ENCODE measurements at regions of chr20 and their contacts with region 1.

Region 1: GRCh38 chr20:51306503-51307358 is 235.8 kb downstream of the NFATC2 start:
- DNase-seq: peak; percentile 90
- H3K4me3 ChIP-seq: peak overlapping the region in 1 of 2 experiments; percentile 35; a peak in 1 of 4 replicates
- H3K27ac ChIP-seq: peak overlapping the region in 1 of 2 experiments; percentile 22; a peak in 1 of 4 replicates
- H3K4me1 ChIP-seq: peaks cover 0 to 13% of the 10 kb centered on the region in 2 experiments; a peak in 1 of 4 replicates
- H3K27me3 ChIP-seq: no peaks in the 10 kb centered on the region
- CTCF ChIP-seq: peak; percentile 88
- EP300 ChIP-seq: no peak
- RAD21 ChIP-seq: peak; percentile 98

Region 2: DNA sequence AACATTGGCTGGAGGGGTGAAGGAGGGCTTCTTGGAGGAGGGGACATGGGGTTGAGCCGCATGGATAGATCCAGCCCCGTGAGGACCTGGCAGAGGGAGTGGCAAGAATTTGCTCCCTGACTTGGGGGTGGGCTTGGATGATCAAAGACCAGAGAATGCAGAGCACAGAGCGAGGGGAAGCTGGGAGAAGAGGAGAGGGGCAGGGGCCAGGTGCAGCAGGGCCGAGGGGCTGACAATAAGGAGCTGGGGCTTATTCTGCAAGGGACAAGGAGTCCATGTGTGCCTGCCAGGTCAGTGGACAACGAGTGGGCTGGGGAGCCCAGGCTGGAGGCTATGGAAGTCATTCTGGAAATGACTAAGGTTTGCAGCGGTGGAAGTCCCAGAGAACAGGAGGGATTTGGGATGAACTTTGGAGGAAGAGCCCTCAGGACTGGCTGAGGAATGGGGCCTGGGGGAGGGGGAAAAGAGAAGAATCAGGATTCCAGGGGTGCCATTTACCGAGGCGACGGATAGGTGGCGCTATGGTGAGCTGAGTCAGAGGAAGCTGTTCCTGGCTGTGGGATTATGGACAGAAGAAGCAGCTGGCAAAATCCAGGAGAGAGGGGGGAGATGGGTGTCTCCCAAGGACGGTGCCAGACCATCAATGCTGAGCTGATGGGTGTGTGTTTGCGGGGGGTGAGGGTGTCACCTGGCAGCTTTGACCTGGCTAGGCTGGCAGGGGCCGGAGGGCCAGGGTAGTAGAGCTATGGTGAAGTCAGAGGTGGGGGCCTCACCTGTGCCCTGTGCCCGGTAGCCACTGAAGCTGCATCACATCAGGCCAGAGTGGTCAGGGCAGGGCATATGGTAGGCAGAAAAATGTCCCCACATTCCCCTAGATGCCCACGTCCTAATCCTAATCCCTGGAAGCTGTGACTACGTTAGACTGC is 291.7 kb before region 1 on chr20:
- CTCF ChIA-PET with region 1: interaction called, 52 read pairs
- POLR2A ChIA-PET with region 1: interaction called, 3 read pairs
- DNase-seq: peak; percentile 87
- H3K4me3 ChIP-seq: no peak overlapping the region
- H3K27ac ChIP-seq: no peak overlapping the region; a peak in 1 of 4 replicates
- H3K4me1 ChIP-seq: peaks cover 0 to 34% of the 10 kb centered on the region in 2 experiments; a peak in 1 of 4 replicates
- H3K27me3 ChIP-seq: no peaks in the 10 kb centered on the region
- CTCF ChIP-seq: peak; percentile 81
- EP300 ChIP-seq: no peak
- RAD21 ChIP-seq: peak; percentile 83

Region 3: GRCh38 chr20:51128198-51128597 is 178.5 kb before region 1 on chr20:
- CTCF ChIA-PET with region 1: interaction called, 14 read pairs
- POLR2A ChIA-PET with region 1: no interaction called
- DNase-seq: no peak
- H3K4me3 ChIP-seq: no peak overlapping the region
- H3K27ac ChIP-seq: peak overlapping the region; percentile 26 to 99; a peak in 3 of 4 replicates
- H3K4me1 ChIP-seq: peaks cover 16 to 65% of the 10 kb centered on the region in 2 experiments; a peak in 3 of 4 replicates
- H3K27me3 ChIP-seq: no peaks in the 10 kb centered on the region
- CTCF ChIP-seq: no peak
- EP300 ChIP-seq: no peak
- RAD21 ChIP-seq: no peak

Region 4: GRCh38 chr20:51275826-51276225 is 30.9 kb before region 1 on chr20:
- CTCF ChIA-PET with region 1: interaction called, 14 read pairs
- POLR2A ChIA-PET with region 1: no interaction called
- DNase-seq: no peak
- H3K4me3 ChIP-seq: no peak overlapping the region
- H3K27ac ChIP-seq: no peak overlapping the region
- H3K4me1 ChIP-seq: peaks cover 0 to 3% of the 10 kb centered on the region in 2 experiments; a peak in 1 of 4 replicates
- H3K27me3 ChIP-seq: no peaks in the 10 kb centered on the region
- CTCF ChIP-seq: no peak
- EP300 ChIP-seq: no peak
- RAD21 ChIP-seq: no peak

Region 5: DNA sequence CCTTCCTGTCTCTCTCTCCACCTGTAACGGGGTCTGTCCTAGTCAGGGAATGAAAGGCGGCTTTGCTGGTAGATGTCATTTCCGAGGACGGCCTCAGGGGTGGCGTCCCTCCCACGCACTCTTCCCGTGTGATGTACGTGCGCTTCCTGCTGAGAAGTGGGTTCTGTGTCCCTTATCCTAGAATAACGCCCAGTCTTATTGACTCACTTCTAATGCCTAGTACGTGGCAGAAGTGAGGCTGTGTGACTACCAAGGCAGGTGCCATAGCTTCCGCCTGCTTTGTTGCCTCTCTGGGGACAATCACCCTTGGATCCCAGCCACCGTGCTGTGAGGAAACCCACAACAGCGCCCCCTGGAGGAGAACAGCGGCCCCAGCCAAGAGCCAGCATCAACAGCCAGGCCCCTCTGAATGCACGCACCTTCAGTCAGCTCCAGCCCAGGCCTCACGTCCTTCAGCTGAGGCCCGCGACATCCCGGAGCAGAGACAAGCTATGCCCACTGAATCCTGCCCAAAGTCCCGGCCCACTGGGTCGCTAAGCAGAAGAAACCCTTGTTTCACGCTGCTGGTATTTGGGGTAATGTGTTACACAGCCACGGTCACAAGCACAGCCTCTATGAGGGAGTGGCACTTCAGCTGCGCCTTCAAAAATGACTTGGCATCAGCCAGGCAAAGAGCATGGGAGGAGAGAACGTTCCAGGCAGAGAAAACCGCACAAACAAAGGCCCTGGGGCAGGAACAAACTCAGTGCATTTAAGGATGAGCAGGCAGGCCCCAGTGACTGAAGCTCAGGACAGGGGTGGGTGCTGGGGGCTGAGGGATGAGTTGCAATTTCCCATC is 11.5 kb after region 1 on chr20:
- CTCF ChIA-PET with region 1: interaction called, 79 read pairs
- POLR2A ChIA-PET with region 1: no interaction called
- DNase-seq: peak; percentile 78
- H3K4me3 ChIP-seq: no peak overlapping the region; a peak in 1 of 4 replicates
- H3K27ac ChIP-seq: no peak overlapping the region
- H3K4me1 ChIP-seq: no peaks in the 10 kb centered on the region; a peak in 1 of 4 replicates
- H3K27me3 ChIP-seq: no peaks in the 10 kb centered on the region
- CTCF ChIP-seq: peak; percentile 60
- EP300 ChIP-seq: no peak
- RAD21 ChIP-seq: peak; percentile 53

Region 6: GRCh38 chr20:51480507-51481270 is 174.0 kb after region 1 on chr20:
- CTCF ChIA-PET with region 1: no interaction called
- POLR2A ChIA-PET with region 1: no interaction called
- DNase-seq: no peak
- H3K4me3 ChIP-seq: no peak overlapping the region
- H3K27ac ChIP-seq: no peak overlapping the region
- H3K4me1 ChIP-seq: peaks cover 0 to 5% of the 10 kb centered on the region in 2 experiments; a peak in 1 of 4 replicates
- H3K27me3 ChIP-seq: no peaks in the 10 kb centered on the region
- CTCF ChIP-seq: no peak
- EP300 ChIP-seq: no peak
- RAD21 ChIP-seq: no peak